Activated CD4-positive, alpha-beta memory T cell treated with anti-CD3 and anti-CD28 coated beads for 36 hours (primary cell): ENCODE measurements at regions of chr9 and their contacts with region 1.

Region 1: GRCh38 chr9:74570879-74571512 is 73.9 kb downstream of the RORB start:
- DNase-seq: peak; percentile 19
- H3K4me3 Mint-ChIP-seq: no peak overlapping the region
- H3K27ac Mint-ChIP-seq: no peak overlapping the region
- H3K4me1 Mint-ChIP-seq: no peaks in the 10 kb centered on the region
- H3K27me3 Mint-ChIP-seq: peaks cover 2% of the 10 kb centered on the region

Region 2: DNA sequence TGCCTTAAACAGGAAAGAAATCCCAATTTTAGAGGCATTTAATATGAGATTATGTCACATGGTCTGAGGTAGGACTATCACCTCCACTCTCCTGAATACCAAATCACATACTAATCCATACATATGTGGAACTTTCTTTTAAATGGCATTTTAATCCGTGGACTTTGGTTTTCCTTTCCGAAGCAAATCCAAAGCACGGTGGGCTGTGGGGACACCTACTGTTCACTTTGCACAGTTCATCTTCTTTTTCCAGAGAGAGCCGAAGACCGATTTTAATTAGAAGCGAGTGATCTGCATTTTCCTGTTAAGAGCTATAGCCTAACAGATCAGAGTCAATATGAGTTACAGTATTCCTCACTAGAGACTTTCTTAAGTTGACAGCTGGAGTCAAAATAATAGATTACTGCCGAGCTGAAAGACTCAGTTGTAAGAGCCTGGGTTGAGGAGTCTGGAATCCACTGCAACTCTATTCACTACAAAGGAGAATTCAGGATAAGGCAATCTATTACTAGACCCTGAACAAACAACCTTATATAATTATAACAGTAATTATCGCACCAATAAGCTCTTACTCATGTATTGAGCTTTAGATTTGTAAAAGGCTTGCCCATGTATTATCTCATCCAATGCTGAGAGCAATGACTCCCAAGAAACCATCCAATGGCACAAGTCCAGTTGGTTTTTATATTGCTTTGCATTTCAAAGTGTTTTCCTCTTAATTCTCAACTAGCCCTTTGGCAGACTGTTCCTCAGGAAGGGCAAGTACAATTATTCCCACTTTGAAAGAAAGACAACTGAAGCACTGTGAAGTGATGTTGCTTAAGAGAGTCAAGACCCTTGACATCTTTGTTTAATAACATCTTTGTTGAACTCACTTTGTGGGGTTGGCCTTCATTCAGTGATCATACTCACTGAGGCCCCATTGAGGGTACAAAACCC is 172.1 kb after region 1 on chr9:
- CTCF ChIA-PET with region 1: no interaction called
- POLR2A ChIA-PET with region 1: no interaction called
- intact Hi-C with region 1: loop called (anchors 10 kb)
- DNase-seq: peak; percentile 19
- H3K4me3 Mint-ChIP-seq: no peak overlapping the region
- H3K27ac Mint-ChIP-seq: no peak overlapping the region
- H3K4me1 Mint-ChIP-seq: no peaks in the 10 kb centered on the region
- H3K27me3 Mint-ChIP-seq: peaks cover 20% of the 10 kb centered on the region